ENCODE measurements at regions of chr19 and their contacts with region 1.

Region 1: DNA sequence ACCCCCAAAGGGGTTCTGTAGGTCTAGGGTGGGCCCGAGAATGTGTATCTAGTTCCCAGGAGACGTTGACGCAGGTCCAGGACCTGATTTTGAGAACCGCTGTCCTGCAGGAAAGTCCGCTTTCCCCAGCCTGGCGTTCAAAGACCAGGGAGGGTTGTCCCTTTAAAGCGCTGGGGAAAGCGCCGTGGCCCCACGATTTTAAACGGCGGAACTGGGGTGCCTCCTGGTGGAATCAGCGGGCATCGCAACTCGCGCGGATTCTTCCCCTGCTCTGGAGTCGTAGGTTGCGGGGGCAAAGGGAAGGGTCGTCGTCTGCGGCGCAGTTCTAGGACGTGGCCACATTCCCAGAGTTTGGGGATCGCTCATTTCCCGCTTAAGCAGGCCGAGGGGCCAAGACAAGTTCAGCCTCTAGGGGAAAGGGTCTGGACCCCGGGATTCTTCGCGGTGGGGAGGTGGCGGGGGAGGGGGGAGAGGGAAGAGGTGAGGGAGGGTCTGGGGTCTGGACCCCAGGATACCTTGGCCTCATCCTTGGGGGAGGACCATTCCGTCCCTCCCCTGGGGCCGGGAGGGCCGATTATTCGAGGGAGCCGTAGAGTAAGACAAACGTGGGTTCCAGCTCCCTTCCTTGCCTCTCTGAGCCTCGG is 7.7 kb downstream of the PNMA8B start:
- DNase-seq: peak; percentile 80
- H3K4me3 ChIP-seq: peak overlapping the region; percentile 35
- H3K27ac ChIP-seq: no peak overlapping the region
- H3K4me1 ChIP-seq: peaks cover 29% of the 10 kb centered on the region
- CTCF ChIP-seq: peak; percentile 93

Region 2: DNA sequence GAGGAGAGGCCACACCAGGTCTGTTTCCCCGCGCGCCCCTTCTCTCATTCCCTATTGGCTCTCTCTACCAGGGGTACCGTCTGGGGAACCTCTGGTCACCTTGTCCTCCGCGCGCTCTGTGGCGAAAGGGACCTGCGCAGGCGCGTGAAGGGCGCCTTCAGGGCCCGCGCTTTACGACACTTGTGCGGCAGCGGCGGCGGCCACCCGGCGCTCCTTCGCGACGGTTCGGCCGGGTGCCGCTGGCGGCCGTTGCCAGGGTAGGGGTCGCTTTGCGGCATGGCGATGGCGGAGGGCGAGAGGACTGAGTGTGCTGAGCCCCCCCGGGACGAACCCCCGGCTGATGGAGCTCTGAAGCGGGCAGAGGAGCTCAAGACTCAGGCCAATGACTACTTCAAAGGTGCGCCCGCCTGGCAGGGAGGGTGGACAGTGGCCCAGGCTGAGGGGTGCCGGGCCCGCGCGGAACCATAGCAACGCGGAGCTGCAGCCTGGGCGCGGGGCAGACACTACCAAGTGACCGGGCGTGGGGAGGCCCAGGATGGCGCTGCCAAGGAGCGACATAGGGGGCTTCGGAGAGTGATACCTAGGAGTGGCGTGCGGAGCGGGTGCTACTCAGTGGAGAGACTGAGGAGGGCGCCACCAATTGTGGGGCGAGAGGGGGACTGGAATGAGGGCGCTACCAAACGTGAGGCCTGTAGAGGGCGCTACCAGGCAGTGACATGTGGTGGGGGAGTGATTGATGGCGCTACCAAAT is 140.9 kb before region 1 on chr19 and contains the start of gene PPP5C:
- CTCF ChIA-PET with region 1: no interaction called
- POLR2A ChIA-PET with region 1: no interaction called
- intact Hi-C with region 1: no loop called
- DNase-seq: peak; percentile 96
- H3K4me3 ChIP-seq: peak within 1 kb of the TSS; percentile 100
- H3K27ac ChIP-seq: peak within 1 kb of the TSS; percentile 75
- H3K4me1 ChIP-seq: peaks cover 49% of the 10 kb centered on the region
- CTCF ChIP-seq: peak; percentile 100
- total RNA-seq, gene PPP5C: 110 and 118 TPM in 2 replicates

Region 3: GRCh38 chr19:46431824-46432223 is 56.1 kb before region 1 on chr19:
- CTCF ChIA-PET with region 1: no interaction called
- POLR2A ChIA-PET with region 1: no interaction called
- intact Hi-C with region 1: loop called (anchors 5 kb)
- DNase-seq: peak; percentile 90
- H3K4me3 ChIP-seq: peak overlapping the region; percentile 38
- H3K27ac ChIP-seq: peak overlapping the region; percentile 83
- H3K4me1 ChIP-seq: peaks cover 60% of the 10 kb centered on the region
- CTCF ChIP-seq: peak; percentile 75

Region 4: DNA sequence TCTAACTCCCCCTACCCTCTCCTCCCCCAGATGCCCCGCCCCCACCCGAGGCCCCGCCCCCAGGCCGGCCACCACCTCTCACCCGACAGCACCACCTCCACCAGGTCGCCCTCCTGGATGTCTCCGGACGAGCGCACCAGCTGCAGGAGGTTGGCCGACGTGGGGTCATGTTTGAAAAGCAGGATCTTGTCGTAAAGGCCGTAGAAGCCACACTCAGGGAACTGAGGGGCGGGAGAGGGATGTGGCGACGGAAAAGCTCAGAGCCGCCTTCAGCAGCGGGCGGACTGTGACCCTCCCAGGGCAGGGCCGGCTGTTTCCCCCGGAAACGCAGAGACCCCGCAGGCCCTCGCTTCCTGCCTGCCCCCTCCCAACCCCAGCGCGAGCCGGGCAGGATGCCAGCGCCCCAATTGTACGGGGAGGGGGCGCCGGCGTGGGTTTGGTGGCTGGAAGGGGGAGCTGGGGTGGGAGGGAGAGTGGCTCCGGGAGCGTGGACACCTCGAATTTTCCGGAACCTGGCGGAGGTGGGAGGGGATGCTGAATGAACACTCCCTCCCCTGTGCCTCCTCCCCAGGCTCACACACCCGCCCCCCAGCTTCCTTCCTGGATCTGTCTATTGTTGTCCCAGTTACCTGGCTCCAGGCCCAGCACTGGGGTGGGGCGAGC is 226.0 kb after region 1 on chr19:
- CTCF ChIA-PET with region 1: no interaction called
- POLR2A ChIA-PET with region 1: no interaction called
- intact Hi-C with region 1: no loop called
- DNase-seq: peak; percentile 75
- H3K4me3 ChIP-seq: peak overlapping the region; percentile 92
- H3K27ac ChIP-seq: peak overlapping the region; percentile 95
- H3K4me1 ChIP-seq: peaks cover 33% of the 10 kb centered on the region
- CTCF ChIP-seq: no peak